SK-N-SH (cell line): ENCODE measurements at regions of chr6 and their contacts with region 1.

Region 1: DNA sequence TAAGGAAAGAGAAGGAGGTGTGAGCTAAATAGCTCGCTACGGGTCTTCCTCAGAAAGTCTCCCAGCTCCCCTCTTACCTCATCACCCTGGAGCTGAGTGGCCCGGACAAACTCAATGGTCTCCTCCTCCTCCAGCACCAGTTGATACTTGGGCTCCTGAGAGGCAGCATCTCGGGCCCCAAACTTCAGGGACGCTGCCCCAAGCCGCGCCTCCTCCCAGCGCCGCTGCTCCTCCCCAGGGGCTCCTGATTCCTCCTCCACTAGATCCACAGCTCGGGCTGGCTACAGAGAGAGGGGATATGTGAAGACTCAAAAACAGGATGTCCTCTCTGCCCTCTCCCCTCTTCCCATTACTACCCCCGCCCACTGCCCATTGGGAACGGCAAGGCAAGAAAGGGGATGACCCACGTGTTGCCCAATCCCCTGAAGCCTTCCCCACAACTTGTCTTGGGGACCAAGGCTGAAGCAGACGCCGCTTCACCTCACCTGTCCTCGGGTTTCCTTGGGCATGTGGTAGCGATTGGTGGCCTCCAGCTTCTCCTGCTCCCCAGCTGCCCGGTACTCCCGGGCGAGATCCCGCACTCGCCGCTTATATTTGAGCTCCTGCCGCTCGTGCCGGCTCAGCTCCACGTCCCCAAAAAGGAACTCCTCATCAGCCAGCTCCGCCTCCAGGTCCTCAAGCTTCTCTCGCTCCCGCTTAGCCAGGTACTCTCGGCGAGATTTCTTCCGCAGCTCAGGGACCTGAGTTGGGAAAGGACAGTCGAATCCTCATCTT is 7.6 kb downstream of the DHX16 start:
- DNase-seq: no peak
- H3K4me3 ChIP-seq: no peak overlapping the region
- H3K27ac ChIP-seq: no peak overlapping the region
- H3K4me1 ChIP-seq: no peaks in the 10 kb centered on the region
- H3K27me3 ChIP-seq: no peaks in the 10 kb centered on the region
- CTCF ChIP-seq: no peak
- EP300 ChIP-seq: no peak
- RAD21 ChIP-seq: no peak

Region 2: DNA sequence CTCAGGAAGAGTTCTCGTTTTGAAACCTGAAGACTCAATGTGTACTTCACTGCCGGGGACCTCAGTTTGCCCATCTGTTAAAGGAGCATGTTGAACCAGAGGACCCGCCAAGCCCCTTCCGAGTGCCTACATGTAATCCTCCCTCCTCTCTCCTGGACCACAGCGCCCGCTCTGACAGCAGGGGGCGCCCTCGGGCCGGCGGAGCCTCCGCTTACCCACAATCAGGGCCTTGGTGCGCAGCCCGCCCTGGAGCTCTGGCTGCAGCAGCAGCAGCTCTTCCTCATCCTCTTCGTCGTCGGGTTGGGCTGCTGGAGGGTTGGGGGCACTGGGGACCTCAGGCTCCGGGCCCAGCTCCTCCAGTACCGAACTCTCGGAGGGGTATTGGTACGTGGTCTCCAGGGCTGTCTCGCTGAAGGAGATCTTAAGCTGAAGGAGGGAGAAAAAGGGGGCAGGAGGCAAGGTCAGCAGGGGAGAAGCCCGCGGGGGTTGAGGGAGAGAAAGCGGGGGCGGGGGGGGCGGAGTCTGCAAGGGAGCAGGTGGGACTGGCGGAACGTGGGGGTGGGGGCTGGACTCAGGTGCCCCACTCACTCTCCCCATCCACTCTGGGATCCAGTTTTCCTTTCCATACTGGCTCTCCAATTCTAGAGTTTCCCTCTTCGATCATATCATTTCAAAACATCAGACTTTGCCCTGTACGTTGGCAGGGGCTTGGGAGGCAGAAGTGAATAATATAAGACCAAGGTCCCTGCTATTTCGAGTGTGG is 14.0 kb after region 1 on chr6:
- CTCF ChIA-PET with region 1: interaction called, 19 read pairs
- POLR2A ChIA-PET with region 1: no interaction called
- DNase-seq: peak; percentile 90
- H3K4me3 ChIP-seq: peak overlapping the region in 1 of 2 experiments; percentile 32; a peak in 1 of 4 replicates
- H3K27ac ChIP-seq: peak overlapping the region in 1 of 2 experiments; percentile 16; a peak in 2 of 4 replicates
- H3K4me1 ChIP-seq: peaks cover 16 to 38% of the 10 kb centered on the region in 2 experiments; a peak in 3 of 4 replicates
- H3K27me3 ChIP-seq: no peaks in the 10 kb centered on the region
- CTCF ChIP-seq: peak; percentile 92
- EP300 ChIP-seq: no peak
- RAD21 ChIP-seq: peak; percentile 88

Region 3: GRCh38 chr6:30690403-30691207 is 25.4 kb after region 1 on chr6 and contains the start of gene NRM:
- CTCF ChIA-PET with region 1: no interaction called
- POLR2A ChIA-PET with region 1: no interaction called
- DNase-seq: peak; percentile 94
- H3K4me3 ChIP-seq: peak within 1 kb of the TSS; percentile 66 to 86
- H3K27ac ChIP-seq: peak within 1 kb of the TSS; percentile 78 to 87
- H3K4me1 ChIP-seq: peaks cover 17 to 34% of the 10 kb centered on the region in 2 experiments; a peak in 2 of 4 replicates
- H3K27me3 ChIP-seq: no peaks in the 10 kb centered on the region
- CTCF ChIP-seq: no peak
- EP300 ChIP-seq: no peak
- RAD21 ChIP-seq: no peak
- polyA plus RNA-seq, gene NRM: 19.7 and 26.8 TPM in 2 replicates